ENCODE measurements at regions of chr3 and their contacts with region 1.

Region 1: GRCh38 chr3:170414202-170414663 is 4.4 kb upstream of the CLDN11 start:
- DNase-seq: no peak
- ATAC-seq: peak; percentile 72
- H3K4me3 Mint-ChIP-seq: no peak overlapping the region
- H3K27ac Mint-ChIP-seq: no peak overlapping the region
- H3K4me1 Mint-ChIP-seq: peaks cover 9% of the 10 kb centered on the region
- H3K27me3 Mint-ChIP-seq: peaks cover 15% of the 10 kb centered on the region
- CTCF ChIP-seq: peak; percentile 98

Region 2: DNA sequence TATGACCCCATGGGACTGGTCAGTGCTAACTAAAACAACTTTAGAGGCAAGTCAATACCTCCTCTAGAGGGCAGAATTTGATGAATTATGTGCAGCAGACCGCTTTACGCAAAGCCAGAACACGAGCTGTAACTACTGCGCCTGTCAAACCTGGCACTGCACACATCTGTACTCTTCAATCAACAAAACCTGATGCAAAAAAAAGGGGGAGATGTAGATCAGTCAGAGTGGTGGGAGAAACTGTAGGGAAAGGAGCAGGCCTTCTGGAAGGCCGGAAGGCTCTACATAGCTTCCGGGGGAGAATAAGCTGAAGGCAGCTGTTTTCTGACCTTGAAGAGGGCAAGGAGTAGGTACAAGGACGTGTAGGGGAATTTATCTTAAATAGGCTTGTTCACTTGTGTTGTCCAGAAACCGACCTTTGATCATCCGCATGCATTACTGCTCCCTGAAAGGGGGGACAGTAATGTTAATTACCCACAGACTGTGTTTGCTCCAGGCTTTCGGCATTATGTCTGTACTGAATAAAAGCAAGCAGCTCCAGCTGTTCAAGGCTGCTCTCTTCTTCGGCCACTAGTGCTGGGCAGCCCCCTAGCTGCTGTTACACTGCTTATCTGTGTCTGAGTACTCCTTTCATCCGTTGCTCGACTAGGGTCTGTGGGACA is 335.5 kb before region 1 on chr3:
- CTCF ChIA-PET with region 1: no interaction called
- POLR2A ChIA-PET with region 1: no interaction called
- intact Hi-C with region 1: no loop called
- DNase-seq: no peak
- ATAC-seq: no peak
- H3K4me3 Mint-ChIP-seq: no peak overlapping the region
- H3K27ac Mint-ChIP-seq: no peak overlapping the region
- H3K4me1 Mint-ChIP-seq: peaks cover 14% of the 10 kb centered on the region
- H3K27me3 Mint-ChIP-seq: no peaks in the 10 kb centered on the region
- CTCF ChIP-seq: no peak

Region 3: DNA sequence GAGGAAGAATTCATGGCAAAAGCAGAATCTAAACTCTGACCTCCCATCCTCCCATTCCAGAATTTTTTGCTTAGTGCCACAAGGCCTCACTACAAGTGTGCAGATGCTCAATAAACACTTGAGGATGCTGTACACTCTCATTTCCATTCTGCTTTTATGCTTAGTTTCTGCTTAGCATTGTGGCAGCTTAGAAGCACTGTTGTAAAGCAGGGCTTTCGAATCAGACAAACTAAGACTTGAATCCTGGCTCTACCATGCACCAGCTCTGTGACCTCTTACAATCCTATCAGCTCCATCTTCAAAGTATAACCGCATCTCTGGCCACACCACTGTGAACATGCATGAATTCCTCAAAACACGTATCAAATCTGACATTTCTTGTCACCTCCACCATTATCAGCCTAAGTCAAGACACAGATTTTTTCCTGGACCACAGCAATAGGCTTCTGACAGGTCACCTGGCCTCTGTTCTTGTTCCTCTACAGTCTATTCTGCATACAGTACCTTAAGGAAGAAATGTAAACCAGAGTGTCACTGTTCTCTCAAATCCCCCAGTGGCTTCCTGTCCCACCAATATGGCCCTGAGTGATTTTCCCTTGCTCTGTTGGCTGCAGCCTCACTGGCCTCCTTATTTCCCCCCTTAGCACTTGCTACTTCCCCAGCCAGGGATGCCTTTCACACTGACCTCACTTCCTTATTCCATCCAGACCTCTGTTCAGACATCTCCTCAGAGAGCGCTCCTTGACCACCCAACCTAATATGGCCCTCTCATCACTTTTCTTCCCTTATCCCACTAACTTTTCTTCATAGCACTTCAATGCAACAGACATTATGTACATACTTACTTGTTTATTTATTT is 224.6 kb before region 1 on chr3:
- CTCF ChIA-PET with region 1: interaction called, 5 read pairs
- POLR2A ChIA-PET with region 1: no interaction called
- intact Hi-C with region 1: loop called (anchors 1 kb)
- DNase-seq: no peak
- ATAC-seq: peak; percentile 7
- H3K4me3 Mint-ChIP-seq: no peak overlapping the region
- H3K27ac Mint-ChIP-seq: no peak overlapping the region
- H3K4me1 Mint-ChIP-seq: peaks cover 7% of the 10 kb centered on the region
- H3K27me3 Mint-ChIP-seq: no peaks in the 10 kb centered on the region
- CTCF ChIP-seq: no peak

Region 4: GRCh38 chr3:170368921-170369320 is 45.3 kb before region 1 on chr3:
- CTCF ChIA-PET with region 1: interaction called, 4 read pairs
- POLR2A ChIA-PET with region 1: no interaction called
- intact Hi-C with region 1: loop called (anchors 2 kb)
- DNase-seq: no peak
- ATAC-seq: no peak
- H3K4me3 Mint-ChIP-seq: no peak overlapping the region
- H3K27ac Mint-ChIP-seq: peak overlapping the region; percentile 46
- H3K4me1 Mint-ChIP-seq: peaks cover 70% of the 10 kb centered on the region
- H3K27me3 Mint-ChIP-seq: no peaks in the 10 kb centered on the region
- CTCF ChIP-seq: no peak

Region 5: GRCh38 chr3:170689893-170690660 is 275.8 kb after region 1 on chr3:
- CTCF ChIA-PET with region 1: interaction called, 10 read pairs
- POLR2A ChIA-PET with region 1: no interaction called
- intact Hi-C with region 1: loop called (anchors 1 kb)
- DNase-seq: peak; percentile 28
- ATAC-seq: peak; percentile 54
- H3K4me3 Mint-ChIP-seq: no peak overlapping the region
- H3K27ac Mint-ChIP-seq: no peak overlapping the region
- H3K4me1 Mint-ChIP-seq: no peaks in the 10 kb centered on the region
- H3K27me3 Mint-ChIP-seq: peaks cover 3% of the 10 kb centered on the region
- CTCF ChIP-seq: no peak

Region 6: GRCh38 chr3:170848292-170848917 is 434.2 kb after region 1 on chr3:
- CTCF ChIA-PET with region 1: interaction called, 3 read pairs
- POLR2A ChIA-PET with region 1: no interaction called
- intact Hi-C with region 1: loop called (anchors 1 kb)
- DNase-seq: no peak
- ATAC-seq: no peak
- H3K4me3 Mint-ChIP-seq: no peak overlapping the region
- H3K27ac Mint-ChIP-seq: no peak overlapping the region
- H3K4me1 Mint-ChIP-seq: no peaks in the 10 kb centered on the region
- H3K27me3 Mint-ChIP-seq: peaks cover 8% of the 10 kb centered on the region
- CTCF ChIP-seq: no peak

Region 7: GRCh38 chr3:172341482-172342059 is 1927.3 kb after region 1 on chr3:
- CTCF ChIA-PET with region 1: no interaction called
- POLR2A ChIA-PET with region 1: no interaction called
- intact Hi-C with region 1: loop called (anchors 10 kb)
- DNase-seq: no peak
- ATAC-seq: peak; percentile 58
- H3K4me3 Mint-ChIP-seq: no peak overlapping the region
- H3K27ac Mint-ChIP-seq: no peak overlapping the region
- H3K4me1 Mint-ChIP-seq: no peaks in the 10 kb centered on the region
- H3K27me3 Mint-ChIP-seq: no peaks in the 10 kb centered on the region
- CTCF ChIP-seq: peak; percentile 53